GM12878 (cell line): ENCODE measurements at regions of chr3 and their contacts with region 1.

Region 1: GRCh38 chr3:4722103-4722502 is 229.0 kb downstream of the ITPR1 start:
- DNase-seq: no peak
- ATAC-seq: peak; percentile 87
- H3K4me3 ChIP-seq: no peak overlapping the region
- H3K27ac ChIP-seq: no peak overlapping the region
- H3K4me1 ChIP-seq: no peaks in the 10 kb centered on the region
- H3K27me3 ChIP-seq: no peaks in the 10 kb centered on the region
- CTCF ChIP-seq: peak; percentile 30 to 56 (median 47); a peak in 5 of 6 replicates
- EP300 ChIP-seq: no peak
- POLR2A ChIP-seq: no peak
- RAD21 ChIP-seq: peak; percentile 85

Region 2: GRCh38 chr3:4751502-4752101 is 29.5 kb after region 1 on chr3:
- CTCF ChIA-PET with region 1: interaction called, 20 read pairs
- POLR2A ChIA-PET with region 1: interaction called, 25 read pairs
- RAD21 ChIA-PET with region 1: interaction called, 264 read pairs
- SMC1A ChIA-PET with region 1: interaction called, 429 read pairs
- in situ Hi-C with region 1: no loop called
- intact Hi-C with region 1: loop called (anchors 1 kb)
- DNase-seq: no peak
- ATAC-seq: peak; percentile 3
- H3K4me3 ChIP-seq: peak overlapping the region; percentile 65
- H3K27ac ChIP-seq: peak overlapping the region; percentile 95
- H3K4me1 ChIP-seq: peaks cover 71% of the 10 kb centered on the region
- H3K27me3 ChIP-seq: no peaks in the 10 kb centered on the region
- CTCF ChIP-seq: no peak
- EP300 ChIP-seq: peak in 1 of 2 experiments; percentile 4; a peak in 1 of 4 replicates
- POLR2A ChIP-seq: no peak
- RAD21 ChIP-seq: no peak

Region 3: DNA sequence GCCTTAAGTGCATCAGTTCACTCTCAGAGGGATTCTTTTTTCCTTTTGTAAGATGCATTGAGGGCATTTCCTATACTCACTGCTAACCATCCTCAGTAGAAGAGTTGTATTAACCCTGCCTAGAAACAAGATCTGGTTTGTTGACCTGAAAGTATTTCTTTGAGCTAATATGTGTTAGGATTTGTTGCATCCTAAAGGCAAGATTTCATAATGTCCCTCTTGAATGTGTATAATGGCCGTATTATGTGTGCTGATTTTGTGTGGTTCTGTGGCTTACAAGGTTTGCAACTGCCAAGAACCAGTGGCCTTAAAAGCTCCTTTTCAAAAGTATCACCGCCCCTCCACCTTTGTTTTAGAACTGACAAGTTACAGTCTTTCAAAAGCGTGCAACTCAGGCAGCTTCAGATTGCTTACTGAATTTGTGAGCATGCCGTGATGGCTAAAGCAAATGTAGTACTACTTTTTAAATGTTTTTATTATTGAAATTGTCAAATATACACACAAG is 75.2 kb after region 1 on chr3:
- CTCF ChIA-PET with region 1: interaction called, 13 read pairs
- POLR2A ChIA-PET with region 1: no interaction called
- RAD21 ChIA-PET with region 1: interaction called, 5 read pairs
- SMC1A ChIA-PET with region 1: interaction called, 19 read pairs
- in situ Hi-C with region 1: no loop called
- intact Hi-C with region 1: no loop called
- DNase-seq: no peak
- ATAC-seq: no peak
- H3K4me3 ChIP-seq: no peak overlapping the region
- H3K27ac ChIP-seq: no peak overlapping the region
- H3K4me1 ChIP-seq: no peaks in the 10 kb centered on the region
- H3K27me3 ChIP-seq: no peaks in the 10 kb centered on the region
- CTCF ChIP-seq: no peak
- EP300 ChIP-seq: no peak
- POLR2A ChIP-seq: no peak
- RAD21 ChIP-seq: no peak

Region 4: GRCh38 chr3:4834403-4834866 is 112.3 kb after region 1 on chr3:
- CTCF ChIA-PET with region 1: interaction called, 4 read pairs
- POLR2A ChIA-PET with region 1: interaction called, 3 read pairs
- RAD21 ChIA-PET with region 1: interaction called, 14 read pairs
- SMC1A ChIA-PET with region 1: interaction called, 10 read pairs
- in situ Hi-C with region 1: no loop called
- intact Hi-C with region 1: loop called (anchors 5 kb)
- DNase-seq: no peak
- ATAC-seq: peak; percentile 63
- H3K4me3 ChIP-seq: no peak overlapping the region
- H3K27ac ChIP-seq: peak overlapping the region; percentile 43; the same call in 1 of the 2 replicates
- H3K4me1 ChIP-seq: peaks cover 43% of the 10 kb centered on the region
- H3K27me3 ChIP-seq: no peaks in the 10 kb centered on the region
- CTCF ChIP-seq: no peak
- EP300 ChIP-seq: peak; percentile 89 to 95; a peak in 3 of 4 replicates
- POLR2A ChIP-seq: no peak
- RAD21 ChIP-seq: 0 out of 2 replicates have a peak, but pooled peaks have one; percentile 4

Region 5: GRCh38 chr3:4986782-4987537 is 264.9 kb after region 1 on chr3:
- CTCF ChIA-PET with region 1: interaction called, 6 read pairs
- POLR2A ChIA-PET with region 1: interaction called, 3 read pairs
- RAD21 ChIA-PET with region 1: interaction called, 13 read pairs
- SMC1A ChIA-PET with region 1: interaction called, 8 read pairs
- in situ Hi-C with region 1: loop called (anchors 5 kb)
- intact Hi-C with region 1: no loop called
- DNase-seq: no peak
- ATAC-seq: peak; percentile 69
- H3K4me3 ChIP-seq: peak overlapping the region; percentile 70
- H3K27ac ChIP-seq: peak overlapping the region; percentile 86
- H3K4me1 ChIP-seq: peaks cover 38% of the 10 kb centered on the region
- H3K27me3 ChIP-seq: no peaks in the 10 kb centered on the region
- CTCF ChIP-seq: no peak
- EP300 ChIP-seq: 0 out of 4 replicates have a peak, but pooled peaks of 1 of the 2 experiments have one; percentile 58
- POLR2A ChIP-seq: peak; percentile 92
- RAD21 ChIP-seq: no peak; the same call in 1 of the 2 replicates

Region 6: GRCh38 chr3:5057857-5058324 is 335.8 kb after region 1 on chr3:
- CTCF ChIA-PET with region 1: interaction called, 53 read pairs
- POLR2A ChIA-PET with region 1: interaction called, 7 read pairs
- RAD21 ChIA-PET with region 1: interaction called, 148 read pairs
- SMC1A ChIA-PET with region 1: interaction called, 203 read pairs
- in situ Hi-C with region 1: loop called (anchors 5 kb)
- intact Hi-C with region 1: loop called (anchors 1 kb)
- DNase-seq: peak; percentile 75
- ATAC-seq: peak; percentile 93
- H3K4me3 ChIP-seq: no peak overlapping the region
- H3K27ac ChIP-seq: no peak overlapping the region
- H3K4me1 ChIP-seq: peaks cover 34% of the 10 kb centered on the region
- H3K27me3 ChIP-seq: no peaks in the 10 kb centered on the region; a peak in 1 of 4 replicates
- CTCF ChIP-seq: peak; percentile 70 to 87 (median 76)
- EP300 ChIP-seq: no peak
- POLR2A ChIP-seq: no peak
- RAD21 ChIP-seq: peak; percentile 99